SK-N-SH (cell line): ENCODE measurements at regions of chr21 and their contacts with region 1.

Region 1: GRCh38 chr21:40385892-40386599 is 460.9 kb downstream of the DSCAM start:
- DNase-seq: peak; percentile 78
- H3K4me3 ChIP-seq: peak overlapping the region in 1 of 2 experiments; percentile 10; a peak in 1 of 4 replicates
- H3K27ac ChIP-seq: no peak overlapping the region
- H3K4me1 ChIP-seq: no peaks in the 10 kb centered on the region; a peak in 1 of 4 replicates
- H3K27me3 ChIP-seq: no peaks in the 10 kb centered on the region
- CTCF ChIP-seq: peak; percentile 42
- EP300 ChIP-seq: no peak
- RAD21 ChIP-seq: peak; percentile 83

Region 2: GRCh38 chr21:40176724-40177123 is 209.3 kb before region 1 on chr21:
- CTCF ChIA-PET with region 1: interaction called, 31 read pairs
- POLR2A ChIA-PET with region 1: no interaction called
- DNase-seq: peak; percentile 85
- H3K4me3 ChIP-seq: no peak overlapping the region
- H3K27ac ChIP-seq: peak overlapping the region in 1 of 2 experiments; percentile 99; a peak in 2 of 4 replicates
- H3K4me1 ChIP-seq: peaks cover 0 to 34% of the 10 kb centered on the region in 2 experiments; a peak in 2 of 4 replicates
- H3K27me3 ChIP-seq: no peaks in the 10 kb centered on the region
- CTCF ChIP-seq: no peak
- EP300 ChIP-seq: peak in 1 of 2 experiments; percentile 97; a peak in 2 of 4 replicates
- RAD21 ChIP-seq: no peak; the same call in 1 of the 2 replicates

Region 3: GRCh38 chr21:40315635-40316034 is 70.4 kb before region 1 on chr21:
- CTCF ChIA-PET with region 1: interaction called, 11 read pairs
- POLR2A ChIA-PET with region 1: no interaction called
- DNase-seq: no peak
- H3K4me3 ChIP-seq: no peak overlapping the region
- H3K27ac ChIP-seq: no peak overlapping the region
- H3K4me1 ChIP-seq: no peaks in the 10 kb centered on the region
- H3K27me3 ChIP-seq: no peaks in the 10 kb centered on the region
- CTCF ChIP-seq: no peak
- EP300 ChIP-seq: no peak
- RAD21 ChIP-seq: no peak

Region 4: DNA sequence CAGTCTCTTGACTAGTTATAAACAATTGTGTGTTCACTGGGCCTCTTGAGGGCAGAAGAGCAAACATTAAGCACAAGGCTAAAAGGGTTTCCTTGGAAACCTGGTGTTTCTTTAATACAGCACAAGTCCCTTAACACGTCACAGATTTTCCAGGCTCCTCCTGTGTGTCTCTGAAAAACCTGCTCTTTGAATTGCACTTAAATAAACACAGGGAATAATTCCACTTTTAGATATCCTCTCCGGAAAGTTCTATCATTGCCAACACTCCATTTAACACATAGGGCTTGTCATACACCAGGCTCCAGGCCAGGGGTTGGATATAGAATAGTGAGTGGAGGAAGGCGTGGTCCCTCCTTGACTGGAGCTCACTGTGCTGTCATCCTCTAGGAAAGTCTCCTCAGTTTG is 18.4 kb after region 1 on chr21:
- CTCF ChIA-PET with region 1: interaction called, 24 read pairs
- POLR2A ChIA-PET with region 1: no interaction called
- DNase-seq: no peak
- H3K4me3 ChIP-seq: no peak overlapping the region
- H3K27ac ChIP-seq: no peak overlapping the region
- H3K4me1 ChIP-seq: no peaks in the 10 kb centered on the region
- H3K27me3 ChIP-seq: no peaks in the 10 kb centered on the region
- CTCF ChIP-seq: no peak
- EP300 ChIP-seq: no peak
- RAD21 ChIP-seq: no peak

Region 5: DNA sequence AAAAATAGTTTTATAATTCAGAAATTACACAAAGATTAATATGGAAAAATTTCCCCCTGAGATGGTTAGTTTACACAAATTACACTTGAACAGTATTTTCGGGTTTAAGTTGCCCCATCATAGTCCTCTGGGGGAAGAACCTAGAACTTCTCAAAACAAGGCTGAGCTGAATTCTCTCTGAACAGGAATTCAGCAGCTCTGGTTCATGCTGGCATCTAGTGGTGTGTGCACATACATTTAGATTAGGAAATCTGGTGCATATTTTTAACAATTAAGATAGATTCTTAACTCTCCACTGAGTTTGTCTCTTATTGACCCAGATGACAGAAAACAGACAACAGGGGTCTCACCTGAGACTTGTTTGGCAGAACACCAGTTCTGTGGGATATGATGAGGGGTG is 50.2 kb after region 1 on chr21:
- CTCF ChIA-PET with region 1: interaction called, 11 read pairs
- POLR2A ChIA-PET with region 1: no interaction called
- DNase-seq: no peak
- H3K4me3 ChIP-seq: no peak overlapping the region
- H3K27ac ChIP-seq: no peak overlapping the region
- H3K4me1 ChIP-seq: no peaks in the 10 kb centered on the region; a peak in 1 of 4 replicates
- H3K27me3 ChIP-seq: no peaks in the 10 kb centered on the region
- CTCF ChIP-seq: no peak
- EP300 ChIP-seq: no peak
- RAD21 ChIP-seq: peak; percentile 51; the same call in 1 of the 2 replicates

Region 6: DNA sequence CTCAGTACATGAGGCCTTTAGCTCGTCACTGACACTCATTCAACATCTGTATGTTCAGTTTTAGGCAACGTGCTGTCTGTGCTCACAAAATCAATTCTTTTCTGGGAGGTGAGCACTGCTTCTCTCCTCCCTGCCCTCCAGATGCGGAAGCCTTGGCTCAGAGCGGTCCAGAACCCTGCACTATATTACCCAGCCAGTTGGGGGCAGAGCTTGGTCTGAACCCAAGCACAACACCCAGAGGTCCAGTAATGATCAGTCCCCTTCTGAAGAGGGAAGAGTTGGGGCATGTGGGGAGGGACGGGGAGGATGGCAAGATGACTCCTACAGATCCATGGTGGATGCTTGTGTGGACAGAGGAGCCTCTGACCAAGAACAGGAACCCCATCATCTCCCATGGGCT is 466.5 kb after region 1 on chr21:
- CTCF ChIA-PET with region 1: no interaction called
- POLR2A ChIA-PET with region 1: no interaction called
- DNase-seq: no peak
- H3K4me3 ChIP-seq: no peak overlapping the region
- H3K27ac ChIP-seq: no peak overlapping the region
- H3K4me1 ChIP-seq: no peaks in the 10 kb centered on the region
- H3K27me3 ChIP-seq: no peaks in the 10 kb centered on the region
- CTCF ChIP-seq: no peak
- EP300 ChIP-seq: no peak
- RAD21 ChIP-seq: no peak